ENCODE measurements at regions of chr20 and their contacts with region 1.

Region 1: DNA sequence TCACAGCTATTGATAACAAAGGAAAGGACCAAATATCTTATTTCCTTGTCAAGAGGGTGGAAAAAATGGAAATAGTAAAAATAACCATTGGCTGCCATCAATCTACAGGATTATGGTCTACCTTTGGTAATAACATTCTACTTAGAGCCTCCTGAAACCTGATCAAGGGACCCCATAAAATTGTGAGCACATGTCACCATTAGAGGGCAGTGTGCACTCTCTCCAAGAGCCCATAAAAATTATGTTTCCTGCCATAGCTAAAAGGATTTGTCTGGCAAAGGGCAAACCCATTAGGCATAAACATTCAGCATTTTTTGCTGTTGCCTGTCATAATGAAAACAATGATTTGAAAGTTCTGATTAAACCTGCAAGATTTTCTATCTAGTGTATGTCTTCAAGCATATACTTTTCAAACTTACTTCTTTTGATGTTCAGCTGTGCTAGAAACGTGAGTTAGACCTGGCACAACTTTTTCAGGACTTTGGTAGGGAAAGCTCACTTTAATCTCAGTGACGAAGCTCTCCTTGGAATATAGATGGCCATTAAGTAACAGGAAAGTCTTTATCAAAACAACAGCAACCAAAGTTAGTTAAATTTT is 120.7 kb upstream of the ZFP64 start:
- DNase-seq: peak; percentile 55 to 69
- ATAC-seq: peak; percentile 66 to 81; a peak in 4 of 6 replicates
- H3K4me3 ChIP-seq: no peak overlapping the region
- H3K27ac ChIP-seq: no peak overlapping the region
- H3K4me1 ChIP-seq: peaks cover 5% of the 10 kb centered on the region; the same call in 1 of the 3 replicates
- CTCF ChIP-seq: peak; percentile 71
- EP300 ChIP-seq: no peak
- POLR2A ChIP-seq: no peak
- RAD21 ChIP-seq: peak; percentile 63

Region 2: GRCh38 chr20:52219441-52219840 is 92.8 kb before region 1 on chr20:
- CTCF ChIA-PET with region 1: no interaction called
- POLR2A ChIA-PET with region 1: no interaction called
- DNase-seq: peak in 1 of 2 experiments; percentile 22
- ATAC-seq: peak in 1 of 2 experiments; percentile 58; a peak in 3 of 6 replicates
- H3K4me3 ChIP-seq: no peak overlapping the region
- H3K27ac ChIP-seq: no peak overlapping the region
- H3K4me1 ChIP-seq: no peaks in the 10 kb centered on the region
- CTCF ChIP-seq: no peak
- EP300 ChIP-seq: no peak
- POLR2A ChIP-seq: no peak
- RAD21 ChIP-seq: peak in 1 of 2 experiments; percentile 14; a peak in 1 of 5 replicates

Region 3: DNA sequence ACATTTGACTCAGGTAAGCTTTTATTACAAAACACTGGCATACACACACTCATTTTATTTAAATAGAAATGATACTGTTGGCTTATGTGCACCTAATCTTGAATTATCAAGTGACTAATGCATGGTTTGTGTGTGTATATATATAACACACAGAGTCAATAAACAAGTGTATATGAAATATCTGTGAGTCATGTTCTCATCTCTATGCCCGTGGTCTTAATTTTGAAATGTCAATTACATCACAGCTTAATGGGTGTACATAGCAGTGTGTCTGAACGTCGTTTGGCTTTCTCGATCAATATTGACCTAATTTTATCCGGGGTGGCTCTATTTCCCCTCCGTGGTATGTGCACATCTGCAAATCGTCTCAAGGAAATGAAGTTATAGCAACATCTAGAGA is 16.7 kb before region 1 on chr20:
- CTCF ChIA-PET with region 1: interaction called, 34 read pairs
- POLR2A ChIA-PET with region 1: no interaction called
- DNase-seq: no peak
- ATAC-seq: no peak
- H3K4me3 ChIP-seq: no peak overlapping the region
- H3K27ac ChIP-seq: no peak overlapping the region
- H3K4me1 ChIP-seq: no peaks in the 10 kb centered on the region
- CTCF ChIP-seq: no peak
- EP300 ChIP-seq: no peak
- POLR2A ChIP-seq: no peak
- RAD21 ChIP-seq: no peak

Region 4: DNA sequence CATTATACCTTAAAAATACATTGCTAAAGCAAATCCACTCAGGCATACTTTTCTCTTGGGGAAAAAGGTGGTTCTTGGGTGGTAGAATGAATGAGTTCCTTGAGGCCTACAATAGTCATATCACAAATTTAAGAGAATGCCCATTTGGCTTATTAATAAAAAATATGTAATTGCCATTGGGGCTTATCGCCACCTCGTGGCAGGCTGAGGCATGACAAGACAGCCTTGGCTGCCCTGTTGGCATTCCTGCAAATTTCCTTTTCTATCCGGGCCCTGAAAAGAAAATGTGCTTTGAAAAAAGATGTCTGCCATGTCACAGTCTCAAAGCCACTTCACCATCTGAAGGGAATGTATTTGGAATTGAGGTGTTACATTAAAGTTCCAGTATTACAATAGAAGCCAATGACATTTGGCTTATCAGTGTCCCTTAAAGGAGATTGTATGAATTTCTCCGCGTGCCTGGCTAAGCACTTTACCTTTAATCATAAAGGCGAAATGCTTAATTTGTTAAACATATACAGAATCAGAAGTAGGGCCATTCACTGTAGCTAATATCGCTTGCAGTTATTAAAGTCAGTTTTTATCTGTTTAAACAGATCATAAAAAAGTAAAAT is 67.6 kb after region 1 on chr20:
- CTCF ChIA-PET with region 1: interaction called, 17 read pairs
- POLR2A ChIA-PET with region 1: no interaction called
- DNase-seq: peak; percentile 25 to 33
- ATAC-seq: 0 out of 6 replicates have a peak, but pooled peaks have one; percentile 29 to 43
- H3K4me3 ChIP-seq: no peak overlapping the region
- H3K27ac ChIP-seq: no peak overlapping the region
- H3K4me1 ChIP-seq: no peaks in the 10 kb centered on the region
- CTCF ChIP-seq: peak; percentile 81
- EP300 ChIP-seq: no peak
- POLR2A ChIP-seq: no peak
- RAD21 ChIP-seq: peak; percentile 66 to 68; a peak in 4 of 5 replicates

Region 5: DNA sequence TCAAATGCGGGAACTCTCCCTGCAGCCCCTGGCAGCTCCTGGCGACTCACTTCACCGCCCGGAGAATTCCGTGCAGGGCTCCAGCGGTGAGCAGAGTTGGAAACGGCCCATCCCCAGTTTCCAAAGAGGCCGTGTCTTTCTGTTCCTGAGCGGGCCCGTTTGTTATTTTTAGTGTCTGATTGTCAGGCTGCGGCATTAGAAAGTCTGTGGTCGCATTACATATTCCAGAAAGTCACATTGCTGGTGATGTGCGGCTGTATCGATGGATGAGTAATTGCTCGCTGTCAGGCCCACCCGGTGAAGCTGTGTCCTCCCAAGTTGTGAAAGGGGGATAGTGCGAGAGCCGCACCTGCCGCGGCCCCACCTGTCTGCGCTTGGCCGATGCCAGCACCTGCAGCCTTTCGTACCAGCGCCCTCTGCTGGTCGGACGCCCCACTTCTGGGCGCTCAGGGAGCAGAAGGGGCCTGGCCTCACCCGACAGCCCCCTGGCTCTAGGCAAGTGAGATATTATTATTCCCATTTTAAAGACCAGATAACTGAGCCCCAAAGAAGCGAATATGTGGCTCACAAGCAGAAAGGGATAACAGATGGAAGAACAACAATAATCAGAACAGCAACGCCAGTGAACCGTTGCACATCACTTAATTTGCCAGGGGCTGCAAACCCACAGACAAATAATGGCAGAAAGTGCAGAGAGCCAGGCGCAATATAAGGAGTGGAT is 904.8 kb after region 1 on chr20:
- CTCF ChIA-PET with region 1: interaction called, 10 read pairs
- POLR2A ChIA-PET with region 1: no interaction called
- DNase-seq: peak; percentile 29 to 47
- ATAC-seq: peak; percentile 76 to 94
- H3K4me3 ChIP-seq: no peak overlapping the region
- H3K27ac ChIP-seq: no peak overlapping the region
- H3K4me1 ChIP-seq: no peaks in the 10 kb centered on the region
- CTCF ChIP-seq: peak; percentile 70
- EP300 ChIP-seq: no peak
- POLR2A ChIP-seq: no peak
- RAD21 ChIP-seq: peak; percentile 60 to 66

Region 6: DNA sequence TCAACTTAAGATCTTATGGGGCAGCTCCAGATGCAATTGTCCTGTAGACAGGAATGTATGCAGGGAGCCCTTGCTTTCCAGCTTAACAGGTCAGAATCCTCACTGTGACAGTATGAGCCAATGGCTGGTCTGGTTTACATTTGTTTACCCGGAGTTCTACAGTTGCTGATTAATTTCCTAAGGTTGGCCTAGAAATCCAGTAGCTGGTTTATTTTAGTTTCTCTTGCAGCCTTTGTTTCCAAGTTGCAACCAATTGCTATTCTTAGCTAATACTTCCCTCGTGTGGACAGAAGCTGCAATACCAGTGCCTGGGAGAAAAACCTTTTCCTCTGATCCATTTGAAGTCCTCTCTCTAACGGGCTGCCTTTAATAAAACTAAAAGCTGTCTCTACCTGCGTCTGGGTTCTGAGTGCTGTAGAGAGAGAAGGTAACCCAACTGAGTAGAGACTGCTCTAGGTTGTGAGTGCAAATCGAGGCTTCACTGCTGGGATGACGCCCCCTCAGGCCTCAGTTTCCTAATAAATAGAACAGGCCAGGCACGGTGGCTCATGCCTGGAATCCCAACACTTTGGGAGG is 1235.5 kb after region 1 on chr20:
- CTCF ChIA-PET with region 1: interaction called, 23 read pairs
- POLR2A ChIA-PET with region 1: no interaction called
- DNase-seq: peak; percentile 69 to 75
- ATAC-seq: peak; percentile 85 to 90
- H3K4me3 ChIP-seq: no peak overlapping the region
- H3K27ac ChIP-seq: no peak overlapping the region
- H3K4me1 ChIP-seq: peaks cover 4% of the 10 kb centered on the region; the same call in 1 of the 3 replicates
- CTCF ChIP-seq: peak; percentile 86
- EP300 ChIP-seq: no peak
- POLR2A ChIP-seq: no peak
- RAD21 ChIP-seq: peak; percentile 91 to 93